CD8-positive, alpha-beta memory T cell (primary cell): ENCODE measurements at regions of chr16 and their contacts with region 1.

Region 1: GRCh38 chr16:56964243-56965148 is 2.7 kb downstream of the CETP start:
- DNase-seq: peak; percentile 87 to 96 (median 95)
- H3K4me3 ChIP-seq: no peak overlapping the region
- H3K4me3 Mint-ChIP-seq: peak overlapping the region in 1 of 7 donors; percentile 11
- H3K27ac ChIP-seq: no peak overlapping the region
- H3K27ac Mint-ChIP-seq: peak overlapping the region in 4 of 8 donors; percentile 31 to 87 (median 82)
- H3K4me1 ChIP-seq: peaks cover 21% of the 10 kb centered on the region
- H3K4me1 Mint-ChIP-seq: peaks cover 18 to 31% (median 21%) of the 10 kb centered on the region in 3 donors
- H3K27me3 ChIP-seq: no peaks in the 10 kb centered on the region
- H3K27me3 Mint-ChIP-seq: peaks cover 0 to 1% of the 10 kb centered on the region in 2 donors

Region 2: GRCh38 chr16:56950881-56951771 is 13.4 kb before region 1 on chr16:
- CTCF ChIA-PET with region 1: interaction called, 45 read pairs
- POLR2A ChIA-PET with region 1: no interaction called
- DNase-seq: peak; percentile 17 to 65 (median 37)
- H3K4me3 ChIP-seq: no peak overlapping the region
- H3K4me3 Mint-ChIP-seq: peak overlapping the region in 1 of 7 donors; percentile 17
- H3K27ac ChIP-seq: no peak overlapping the region
- H3K27ac Mint-ChIP-seq: peak overlapping the region in 5 of 8 donors; percentile 5 to 71 (median 18)
- H3K4me1 ChIP-seq: no peaks in the 10 kb centered on the region
- H3K4me1 Mint-ChIP-seq: peaks cover 12 to 17% (median 12%) of the 10 kb centered on the region in 3 donors
- H3K27me3 ChIP-seq: no peaks in the 10 kb centered on the region
- H3K27me3 Mint-ChIP-seq: peaks cover 0 to 2% of the 10 kb centered on the region in 2 donors

Region 3: GRCh38 chr16:57023541-57024249 is 59.2 kb after region 1 on chr16:
- CTCF ChIA-PET with region 1: interaction called, 46 read pairs
- POLR2A ChIA-PET with region 1: interaction called, 4 read pairs
- DNase-seq: peak; percentile 57 to 91 (median 86)
- H3K4me3 ChIP-seq: peak overlapping the region; percentile 36
- H3K4me3 Mint-ChIP-seq: peak overlapping the region; percentile 60 to 89 (median 76)
- H3K27ac ChIP-seq: no peak overlapping the region
- H3K27ac Mint-ChIP-seq: peak overlapping the region; percentile 79 to 94 (median 92)
- H3K4me1 ChIP-seq: peaks cover 87% of the 10 kb centered on the region
- H3K4me1 Mint-ChIP-seq: peaks cover 87 to 95% (median 94%) of the 10 kb centered on the region in 3 donors
- H3K27me3 ChIP-seq: no peaks in the 10 kb centered on the region
- H3K27me3 Mint-ChIP-seq: peaks cover 0 to 1% of the 10 kb centered on the region in 2 donors

Region 4: DNA sequence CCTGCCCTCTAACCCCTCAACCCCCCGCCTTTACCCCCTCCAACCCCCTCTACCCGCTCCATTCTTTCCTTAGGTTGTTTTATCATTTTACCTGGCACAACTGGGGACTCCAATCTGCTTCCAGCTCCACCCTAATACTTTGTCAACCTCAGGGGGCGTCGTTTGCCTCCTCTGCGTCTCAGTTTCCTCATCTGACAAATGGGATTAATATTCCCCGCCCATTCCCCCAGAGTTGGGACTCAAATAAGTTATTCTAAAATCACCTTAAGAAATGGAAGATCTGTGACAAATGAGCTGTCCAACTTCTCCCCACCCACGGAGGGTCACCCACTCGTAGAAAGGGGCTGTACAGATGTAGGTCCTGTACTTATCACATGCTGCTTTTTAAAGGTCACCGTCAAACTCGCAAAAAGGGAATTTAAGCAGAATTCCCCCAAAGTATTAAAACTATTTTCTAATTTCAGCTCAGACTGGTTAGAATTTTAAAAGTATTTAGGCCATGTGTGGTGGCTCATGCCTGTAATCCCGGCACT is 87.3 kb after region 1 on chr16:
- CTCF ChIA-PET with region 1: interaction called, 58 read pairs
- POLR2A ChIA-PET with region 1: no interaction called
- DNase-seq: no peak
- H3K4me3 ChIP-seq: no peak overlapping the region
- H3K4me3 Mint-ChIP-seq: no peak overlapping the region
- H3K27ac ChIP-seq: no peak overlapping the region
- H3K27ac Mint-ChIP-seq: peak overlapping the region in 6 of 8 donors; percentile 61 to 84 (median 80)
- H3K4me1 ChIP-seq: no peaks in the 10 kb centered on the region
- H3K4me1 Mint-ChIP-seq: peaks cover 12 to 28% (median 19%) of the 10 kb centered on the region in 3 donors
- H3K27me3 ChIP-seq: no peaks in the 10 kb centered on the region
- H3K27me3 Mint-ChIP-seq: peaks cover 0 to 4% of the 10 kb centered on the region in 2 donors

Region 5: GRCh38 chr16:57091975-57092785 is 127.7 kb after region 1 on chr16 and contains the start of gene CPNE2:
- CTCF ChIA-PET with region 1: interaction called, 10 read pairs
- POLR2A ChIA-PET with region 1: no interaction called
- DNase-seq: peak in 1 of 5 donors; percentile 21
- H3K4me3 ChIP-seq: peak within 1 kb of the TSS; percentile 54
- H3K4me3 Mint-ChIP-seq: peak within 1 kb of the TSS; percentile 72 to 92 (median 82)
- H3K27ac ChIP-seq: peak within 1 kb of the TSS; percentile 43
- H3K27ac Mint-ChIP-seq: peak within 1 kb of the TSS in 5 of 8 donors; percentile 10 to 93 (median 33)
- H3K4me1 ChIP-seq: peaks cover 6% of the 10 kb centered on the region
- H3K4me1 Mint-ChIP-seq: peaks cover 4 to 20% (median 9%) of the 10 kb centered on the region in 3 donors
- H3K27me3 ChIP-seq: no peaks in the 10 kb centered on the region
- H3K27me3 Mint-ChIP-seq: peaks cover 0 to 5% of the 10 kb centered on the region in 2 donors
- total RNA-seq, gene CPNE2: 9.4 TPM